T-cell (primary cell): ENCODE measurements at regions of chr1 and their contacts with region 1.

Region 1: GRCh38 chr1:94993931-94994645 is 67.2 kb upstream of the CNN3 start:
- DNase-seq: no peak
- ATAC-seq: no peak
- H3K4me3 ChIP-seq: no peak overlapping the region
- H3K4me3 Mint-ChIP-seq: no peak overlapping the region
- H3K27ac ChIP-seq: no peak overlapping the region
- H3K27ac Mint-ChIP-seq: peak overlapping the region in 1 of 2 donors; percentile 40
- H3K4me1 ChIP-seq: peaks cover 0 to 7% of the 10 kb centered on the region in 2 experiments
- H3K4me1 Mint-ChIP-seq: peaks cover 9 to 20% (median 15%) of the 10 kb centered on the region in 3 donors
- H3K27me3 ChIP-seq: no peaks in the 10 kb centered on the region
- H3K27me3 Mint-ChIP-seq: no peaks in the 10 kb centered on the region

Region 2: DNA sequence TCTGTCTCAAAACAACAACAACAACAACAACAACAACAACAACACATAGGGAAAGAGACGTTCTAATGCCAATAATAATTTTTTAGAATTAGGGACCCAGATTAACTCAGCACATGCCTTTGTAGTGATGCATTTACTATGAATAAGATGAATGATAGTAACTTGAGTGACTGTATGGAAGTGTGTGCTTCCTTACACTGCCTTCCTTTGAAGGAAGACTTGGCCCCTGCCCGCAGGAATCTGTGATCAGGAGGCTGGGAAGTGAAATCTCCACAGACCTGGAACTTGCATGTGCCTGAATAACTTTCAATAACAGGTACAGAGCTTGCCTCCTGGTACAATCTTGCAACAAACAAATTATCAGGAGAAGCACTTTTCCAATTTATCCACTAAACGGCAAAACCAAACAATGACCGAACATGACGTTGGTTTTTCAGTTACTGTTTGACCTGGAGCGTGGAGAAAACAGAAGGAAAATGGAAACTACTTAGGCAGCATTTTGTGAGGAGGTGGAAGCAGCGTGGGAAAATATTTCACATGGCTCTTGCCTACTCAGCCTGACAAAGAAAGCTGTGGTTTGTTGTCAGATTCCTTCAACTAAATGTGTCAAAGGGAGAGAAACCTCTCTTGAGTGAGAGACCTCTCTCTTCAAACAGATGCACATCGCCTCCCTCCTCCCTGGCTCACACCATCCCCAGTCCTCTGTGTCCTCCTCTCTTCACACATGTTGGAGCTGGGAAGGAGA is 863.1 kb before region 1 on chr1:
- CTCF ChIA-PET with region 1: no interaction called
- POLR2A ChIA-PET with region 1: no interaction called
- DNase-seq: no peak
- ATAC-seq: no peak
- H3K4me3 ChIP-seq: no peak overlapping the region
- H3K4me3 Mint-ChIP-seq: no peak overlapping the region
- H3K27ac ChIP-seq: no peak overlapping the region
- H3K27ac Mint-ChIP-seq: no peak overlapping the region
- H3K4me1 ChIP-seq: no peaks in the 10 kb centered on the region
- H3K4me1 Mint-ChIP-seq: no peaks in the 10 kb centered on the region
- H3K27me3 ChIP-seq: peaks cover 0 to 5% of the 10 kb centered on the region in 2 experiments
- H3K27me3 Mint-ChIP-seq: peaks cover 0 to 7% of the 10 kb centered on the region in 2 donors

Region 3: GRCh38 chr1:94773931-94774422 is 220.1 kb before region 1 on chr1:
- CTCF ChIA-PET with region 1: no interaction called
- POLR2A ChIA-PET with region 1: no interaction called
- DNase-seq: no peak
- ATAC-seq: no peak
- H3K4me3 ChIP-seq: no peak overlapping the region
- H3K4me3 Mint-ChIP-seq: no peak overlapping the region
- H3K27ac ChIP-seq: no peak overlapping the region
- H3K27ac Mint-ChIP-seq: no peak overlapping the region
- H3K4me1 ChIP-seq: no peaks in the 10 kb centered on the region
- H3K4me1 Mint-ChIP-seq: no peaks in the 10 kb centered on the region
- H3K27me3 ChIP-seq: peaks cover 0 to 4% of the 10 kb centered on the region in 2 experiments
- H3K27me3 Mint-ChIP-seq: peaks cover 0 to under 1% of the 10 kb centered on the region in 2 donors

Region 4: GRCh38 chr1:94982398-94982797 is 11.7 kb before region 1 on chr1:
- CTCF ChIA-PET with region 1: interaction called in 1 of 2 experiments, 7 read pairs
- POLR2A ChIA-PET with region 1: interaction called in 1 of 2 experiments, 11 read pairs
- DNase-seq: no peak
- ATAC-seq: no peak
- H3K4me3 ChIP-seq: no peak overlapping the region
- H3K4me3 Mint-ChIP-seq: no peak overlapping the region
- H3K27ac ChIP-seq: no peak overlapping the region
- H3K27ac Mint-ChIP-seq: no peak overlapping the region
- H3K4me1 ChIP-seq: no peaks in the 10 kb centered on the region
- H3K4me1 Mint-ChIP-seq: peaks cover 7 to 16% (median 8%) of the 10 kb centered on the region in 3 donors
- H3K27me3 ChIP-seq: no peaks in the 10 kb centered on the region
- H3K27me3 Mint-ChIP-seq: no peaks in the 10 kb centered on the region

Region 5: DNA sequence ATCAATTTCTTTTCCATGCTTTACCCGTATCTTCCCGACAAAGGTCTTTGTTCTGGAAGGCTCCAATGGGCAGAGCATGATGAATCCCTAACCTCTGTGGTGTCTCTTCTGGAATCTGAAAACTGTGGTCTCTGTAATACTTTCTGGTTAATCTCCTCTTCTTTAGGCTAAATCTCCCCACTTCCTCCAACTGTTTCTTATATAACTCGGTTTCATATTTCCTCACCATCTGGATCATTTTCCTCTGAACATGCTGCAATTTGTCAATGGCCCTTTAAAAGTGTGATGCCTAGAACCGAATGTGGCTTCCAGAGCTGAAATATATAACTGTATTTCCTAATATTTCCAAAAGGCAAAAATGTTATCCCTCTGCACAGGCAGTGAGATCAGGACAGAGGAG is 12.6 kb after region 1 on chr1:
- CTCF ChIA-PET with region 1: no interaction called
- POLR2A ChIA-PET with region 1: no interaction called
- DNase-seq: no peak
- ATAC-seq: no peak
- H3K4me3 ChIP-seq: no peak overlapping the region
- H3K4me3 Mint-ChIP-seq: no peak overlapping the region
- H3K27ac ChIP-seq: no peak overlapping the region
- H3K27ac Mint-ChIP-seq: no peak overlapping the region
- H3K4me1 ChIP-seq: no peaks in the 10 kb centered on the region
- H3K4me1 Mint-ChIP-seq: no peaks in the 10 kb centered on the region
- H3K27me3 ChIP-seq: no peaks in the 10 kb centered on the region
- H3K27me3 Mint-ChIP-seq: no peaks in the 10 kb centered on the region

Region 6: DNA sequence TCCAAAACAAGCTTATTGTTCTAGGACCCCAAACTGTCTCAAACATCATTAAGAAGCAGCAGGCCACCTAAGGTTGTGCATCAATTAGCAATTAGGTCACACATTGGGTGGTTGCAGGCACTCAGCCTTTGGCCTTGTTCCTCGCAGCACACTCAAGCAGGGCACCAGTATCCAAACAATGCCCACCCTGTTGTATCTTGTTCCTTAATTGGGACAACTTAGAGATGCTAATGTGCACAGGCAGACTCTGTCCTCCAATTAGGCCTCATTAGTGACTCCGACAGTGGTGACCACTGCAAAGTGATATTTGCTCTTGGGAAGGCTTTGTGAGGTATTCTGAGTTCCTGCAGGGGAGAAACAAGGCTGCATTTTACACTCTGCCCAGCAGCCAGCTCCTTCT is 1212.4 kb after region 1 on chr1:
- CTCF ChIA-PET with region 1: no interaction called
- POLR2A ChIA-PET with region 1: no interaction called
- DNase-seq: no peak
- ATAC-seq: no peak
- H3K4me3 ChIP-seq: no peak overlapping the region
- H3K4me3 Mint-ChIP-seq: no peak overlapping the region
- H3K27ac ChIP-seq: no peak overlapping the region
- H3K27ac Mint-ChIP-seq: no peak overlapping the region
- H3K4me1 ChIP-seq: no peaks in the 10 kb centered on the region
- H3K4me1 Mint-ChIP-seq: no peaks in the 10 kb centered on the region
- H3K27me3 ChIP-seq: no peaks in the 10 kb centered on the region
- H3K27me3 Mint-ChIP-seq: no peaks in the 10 kb centered on the region